ENCODE measurements at regions of chr6 and their contacts with region 1.

Region 1: DNA sequence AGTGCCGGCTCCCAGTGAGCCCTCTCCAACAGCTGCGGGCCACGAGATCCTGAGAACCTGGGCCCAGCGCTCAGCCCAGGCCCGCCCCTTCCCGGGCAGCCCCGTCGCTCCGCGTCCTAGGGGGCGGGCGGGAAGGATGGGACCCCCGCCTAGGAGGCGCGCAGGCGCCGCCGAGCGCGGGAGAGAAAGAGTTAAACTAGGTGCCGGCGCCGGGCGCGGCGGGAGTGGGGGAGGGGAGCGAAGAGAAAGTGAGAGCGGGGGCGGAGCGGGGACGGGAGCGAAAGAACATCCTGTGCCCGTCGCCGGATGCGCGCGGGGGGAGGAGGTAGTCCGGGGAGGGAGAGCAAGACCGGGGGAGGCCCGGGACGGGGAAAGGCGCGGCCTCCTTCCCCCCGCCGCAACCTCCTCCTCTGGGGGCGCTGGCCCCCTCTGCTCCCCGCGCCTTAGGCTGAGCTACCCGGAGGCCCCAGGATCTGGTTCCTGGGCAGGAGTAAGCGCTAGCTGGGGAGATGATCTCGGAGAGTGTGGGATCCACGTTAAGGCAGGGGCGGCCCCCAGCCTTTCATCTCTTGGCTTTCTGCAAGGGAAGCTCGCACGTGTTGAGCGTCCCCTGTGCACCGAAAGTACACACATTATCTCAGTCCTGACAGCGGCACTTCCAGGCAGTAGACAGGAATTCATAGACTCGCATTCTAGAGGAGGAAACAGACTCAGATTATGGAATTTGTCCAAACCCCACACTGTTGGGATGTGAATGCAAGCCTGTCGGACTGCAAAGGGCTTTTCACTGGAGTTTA is 4.9 kb upstream of the ARMC12 start:
- DNase-seq: peak; percentile 87
- H3K4me3 ChIP-seq: peak overlapping the region; percentile 51 to 73 (median 61)
- H3K27ac ChIP-seq: peak overlapping the region; percentile 88
- H3K4me1 ChIP-seq: peaks cover 34% of the 10 kb centered on the region
- H3K27me3 ChIP-seq: no peaks in the 10 kb centered on the region
- CTCF ChIP-seq: peak; percentile 5 to 28
- POLR2A ChIP-seq: peak; percentile 75

Region 2: DNA sequence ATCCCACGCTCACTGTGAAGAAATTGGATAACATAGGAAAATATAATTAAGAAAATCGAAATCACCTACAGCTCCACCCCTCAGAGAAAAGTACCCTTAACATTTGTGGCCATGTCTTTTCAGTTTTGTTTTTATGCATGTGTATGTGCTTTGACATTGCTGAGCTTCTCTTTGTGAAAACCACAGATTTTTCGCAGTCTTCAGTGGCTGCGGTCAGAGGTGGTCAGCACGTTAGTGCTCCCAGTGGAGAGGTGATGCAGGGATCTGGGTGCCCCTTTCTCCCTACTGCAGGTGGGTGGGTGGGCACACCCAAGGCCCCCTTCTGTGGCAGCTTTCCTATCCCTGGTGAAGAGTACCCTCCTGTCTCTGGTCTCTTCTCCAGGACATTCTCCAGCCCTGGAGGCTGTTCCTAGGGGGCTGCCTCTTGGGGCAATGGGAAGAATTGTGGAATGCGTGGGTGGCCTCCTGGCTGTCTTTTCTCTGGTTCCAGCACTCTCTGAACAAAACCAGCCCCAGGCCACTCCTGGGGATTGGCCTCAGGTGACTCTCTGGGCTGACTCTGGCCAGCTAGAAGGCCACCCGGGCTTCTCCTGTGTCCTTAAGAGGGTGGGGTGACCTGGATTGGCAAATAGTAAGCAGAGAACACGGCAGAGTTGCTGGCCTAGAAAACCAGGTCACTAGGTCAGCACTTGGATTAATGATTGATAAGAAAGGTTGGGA is 329.6 kb before region 1 on chr6:
- CTCF ChIA-PET with region 1: no interaction called
- POLR2A ChIA-PET with region 1: no interaction called
- dilution Hi-C with region 1: no loop called
- intact Hi-C with region 1: no loop called
- DNase-seq: no peak
- H3K4me3 ChIP-seq: no peak overlapping the region
- H3K27ac ChIP-seq: no peak overlapping the region
- H3K4me1 ChIP-seq: no peaks in the 10 kb centered on the region
- H3K27me3 ChIP-seq: no peaks in the 10 kb centered on the region
- CTCF ChIP-seq: no peak
- POLR2A ChIP-seq: no peak

Region 3: DNA sequence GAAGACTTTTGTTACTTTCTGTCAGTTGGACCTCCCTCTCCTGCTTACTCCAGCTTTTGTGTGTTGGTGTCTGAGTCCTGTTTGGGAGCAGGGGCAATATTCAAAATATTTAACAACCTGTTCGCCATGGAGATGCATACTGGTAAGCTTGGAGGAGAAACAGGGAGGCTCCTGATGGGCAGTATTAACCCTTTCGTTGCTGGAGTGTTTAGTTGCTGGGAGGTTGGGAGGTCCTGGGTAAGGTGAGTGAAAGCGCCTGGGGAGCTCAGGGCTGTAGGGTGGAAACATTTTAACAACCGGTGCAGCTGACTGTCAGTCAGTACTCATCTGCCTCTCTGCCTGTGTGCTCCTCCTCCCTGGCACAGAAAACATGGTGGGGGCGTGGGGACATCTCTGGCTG is 223.4 kb before region 1 on chr6:
- CTCF ChIA-PET with region 1: interaction called, 11 read pairs
- POLR2A ChIA-PET with region 1: no interaction called
- dilution Hi-C with region 1: no loop called
- intact Hi-C with region 1: no loop called
- DNase-seq: no peak
- H3K4me3 ChIP-seq: no peak overlapping the region
- H3K27ac ChIP-seq: no peak overlapping the region
- H3K4me1 ChIP-seq: no peaks in the 10 kb centered on the region
- H3K27me3 ChIP-seq: peaks cover 25 to 50% of the 10 kb centered on the region in 2 experiments
- CTCF ChIP-seq: no peak
- POLR2A ChIP-seq: no peak

Region 4: DNA sequence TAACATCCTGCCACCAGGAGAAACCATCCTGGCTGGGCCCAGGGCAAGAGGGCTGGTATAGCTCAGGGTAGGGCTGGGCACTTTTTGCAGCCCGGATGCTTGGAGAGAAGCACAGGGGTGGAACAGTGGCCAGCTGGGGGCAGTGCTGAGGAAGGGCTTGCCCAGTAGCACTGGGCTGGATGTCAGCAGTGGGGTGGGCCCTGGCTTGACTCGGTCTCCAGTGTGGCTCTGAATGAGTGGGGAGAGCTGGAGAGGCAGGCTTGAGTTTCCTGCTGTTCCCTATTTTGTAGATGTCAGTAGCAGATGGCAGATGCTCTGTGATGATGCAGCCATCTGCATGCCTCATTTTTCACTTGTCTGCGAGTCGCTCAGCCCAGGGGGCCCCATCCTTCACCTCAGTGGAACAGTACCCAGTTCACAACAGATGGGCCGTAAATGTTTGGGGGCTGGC is 162.9 kb before region 1 on chr6:
- CTCF ChIA-PET with region 1: interaction called, 60 read pairs
- POLR2A ChIA-PET with region 1: no interaction called
- dilution Hi-C with region 1: no loop called
- intact Hi-C with region 1: loop called (anchors 1 kb)
- DNase-seq: no peak
- H3K4me3 ChIP-seq: no peak overlapping the region
- H3K27ac ChIP-seq: no peak overlapping the region
- H3K4me1 ChIP-seq: no peaks in the 10 kb centered on the region
- H3K27me3 ChIP-seq: peaks cover 12% of the 10 kb centered on the region in 2 experiments
- CTCF ChIP-seq: peak; percentile 44 to 68
- POLR2A ChIP-seq: no peak

Region 5: DNA sequence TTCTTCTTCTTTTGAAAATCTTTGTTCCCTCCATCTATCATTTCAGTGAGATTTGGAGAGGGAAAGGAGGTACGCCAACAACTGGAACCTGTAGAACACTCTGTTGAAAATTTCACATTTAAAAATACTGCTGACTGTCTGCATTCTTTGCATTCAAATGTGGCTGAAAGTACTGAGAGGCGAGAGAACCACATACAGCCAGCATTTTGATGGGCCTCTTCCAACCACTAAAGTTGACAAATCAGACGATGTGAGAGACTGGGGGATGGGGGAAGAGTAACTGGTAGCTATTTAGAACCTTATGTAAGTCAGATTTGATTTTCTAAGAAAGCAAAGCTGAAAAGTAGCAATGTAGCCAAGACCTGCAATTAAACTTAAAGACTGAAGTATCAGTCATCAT is 120.7 kb before region 1 on chr6:
- CTCF ChIA-PET with region 1: interaction called, 11 read pairs
- POLR2A ChIA-PET with region 1: no interaction called
- dilution Hi-C with region 1: no loop called
- intact Hi-C with region 1: no loop called
- DNase-seq: no peak
- H3K4me3 ChIP-seq: no peak overlapping the region
- H3K27ac ChIP-seq: no peak overlapping the region
- H3K4me1 ChIP-seq: no peaks in the 10 kb centered on the region
- H3K27me3 ChIP-seq: no peaks in the 10 kb centered on the region
- CTCF ChIP-seq: no peak
- POLR2A ChIP-seq: no peak

Region 6: GRCh38 chr6:35647400-35647799 is 84.5 kb before region 1 on chr6:
- CTCF ChIA-PET with region 1: interaction called, 18 read pairs
- POLR2A ChIA-PET with region 1: no interaction called
- dilution Hi-C with region 1: no loop called
- intact Hi-C with region 1: no loop called
- DNase-seq: no peak
- H3K4me3 ChIP-seq: no peak overlapping the region
- H3K27ac ChIP-seq: no peak overlapping the region
- H3K4me1 ChIP-seq: no peaks in the 10 kb centered on the region
- H3K27me3 ChIP-seq: no peaks in the 10 kb centered on the region
- CTCF ChIP-seq: no peak
- POLR2A ChIP-seq: no peak

Region 7: GRCh38 chr6:35688581-35689322 is 43.2 kb before region 1 on chr6 and contains the start of gene FKBP5:
- CTCF ChIA-PET with region 1: interaction called, 100 read pairs
- POLR2A ChIA-PET with region 1: interaction called, 3 read pairs
- dilution Hi-C with region 1: no loop called
- intact Hi-C with region 1: loop called (anchors 1 kb)
- DNase-seq: peak; percentile 89
- H3K4me3 ChIP-seq: peak within 1 kb of the TSS; percentile 55 to 91 (median 56)
- H3K27ac ChIP-seq: peak within 1 kb of the TSS; percentile 79
- H3K4me1 ChIP-seq: peaks cover 10% of the 10 kb centered on the region
- H3K27me3 ChIP-seq: no peaks in the 10 kb centered on the region
- CTCF ChIP-seq: no peak
- POLR2A ChIP-seq: peak; percentile 92
- total RNA-seq, gene FKBP5: 56.8 and 70.6 TPM in 2 replicates

Region 8: GRCh38 chr6:36094753-36095496 is 363.0 kb after region 1 on chr6:
- CTCF ChIA-PET with region 1: interaction called, 19 read pairs
- POLR2A ChIA-PET with region 1: no interaction called
- dilution Hi-C with region 1: no loop called
- intact Hi-C with region 1: loop called (anchors 2 kb)
- DNase-seq: peak; percentile 83
- H3K4me3 ChIP-seq: no peak overlapping the region
- H3K27ac ChIP-seq: no peak overlapping the region
- H3K4me1 ChIP-seq: peaks cover 8% of the 10 kb centered on the region
- H3K27me3 ChIP-seq: no peaks in the 10 kb centered on the region
- CTCF ChIP-seq: peak; percentile 93 to 94
- POLR2A ChIP-seq: no peak

Measured in endothelial cell of umbilical vein (primary cell).